ENCODE measurements at regions of chr1 and their contacts with region 1.

Region 1: GRCh38 chr1:159132271-159132881 is 39.0 kb upstream of the CADM3 start:
- H3K4me3 Mint-ChIP-seq: no peak overlapping the region
- H3K27ac Mint-ChIP-seq: no peak overlapping the region
- H3K4me1 Mint-ChIP-seq: no peaks in the 10 kb centered on the region
- H3K27me3 Mint-ChIP-seq: no peaks in the 10 kb centered on the region

Region 2: DNA sequence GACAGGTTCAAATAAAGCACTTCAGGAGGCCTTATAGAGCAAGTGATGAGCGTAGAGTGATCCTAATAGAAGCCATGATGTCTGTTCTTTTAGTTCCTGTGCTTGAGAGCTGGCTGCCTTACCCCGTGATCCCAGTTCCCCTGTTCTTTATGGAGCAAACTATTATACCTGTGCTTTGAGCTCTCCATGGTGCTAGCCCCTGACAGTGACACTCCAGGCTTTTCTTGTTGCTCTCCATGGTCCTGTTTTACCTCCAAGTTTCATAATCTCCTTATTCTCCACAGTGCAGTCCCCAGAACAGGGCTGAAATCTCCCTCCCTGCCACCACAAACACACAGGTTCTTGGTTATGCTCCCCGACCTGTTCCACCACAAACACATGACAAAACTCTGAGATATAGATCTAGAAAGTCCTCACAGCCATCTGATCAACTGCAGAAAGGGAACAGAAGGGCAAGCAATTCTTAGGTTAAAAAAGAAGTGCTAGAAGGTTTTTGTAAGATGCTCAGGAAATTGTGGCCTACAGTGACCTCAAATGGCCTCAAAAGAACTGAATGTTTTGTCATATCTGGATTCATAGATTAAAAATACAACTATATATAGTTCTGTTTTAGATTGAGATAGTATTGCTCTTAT is 45.0 kb after region 1 on chr1:
- intact Hi-C with region 1: no loop called
- H3K4me3 Mint-ChIP-seq: no peak overlapping the region
- H3K27ac Mint-ChIP-seq: no peak overlapping the region
- H3K4me1 Mint-ChIP-seq: peaks cover 26% of the 10 kb centered on the region
- H3K27me3 Mint-ChIP-seq: peaks cover 56% of the 10 kb centered on the region

Region 3: GRCh38 chr1:159197561-159198557 is 65.5 kb after region 1 on chr1:
- intact Hi-C with region 1: loop called (anchors 2 kb)
- H3K4me3 Mint-ChIP-seq: no peak overlapping the region
- H3K27ac Mint-ChIP-seq: no peak overlapping the region
- H3K4me1 Mint-ChIP-seq: peaks cover 27% of the 10 kb centered on the region
- H3K27me3 Mint-ChIP-seq: peaks cover 22% of the 10 kb centered on the region

Region 4: DNA sequence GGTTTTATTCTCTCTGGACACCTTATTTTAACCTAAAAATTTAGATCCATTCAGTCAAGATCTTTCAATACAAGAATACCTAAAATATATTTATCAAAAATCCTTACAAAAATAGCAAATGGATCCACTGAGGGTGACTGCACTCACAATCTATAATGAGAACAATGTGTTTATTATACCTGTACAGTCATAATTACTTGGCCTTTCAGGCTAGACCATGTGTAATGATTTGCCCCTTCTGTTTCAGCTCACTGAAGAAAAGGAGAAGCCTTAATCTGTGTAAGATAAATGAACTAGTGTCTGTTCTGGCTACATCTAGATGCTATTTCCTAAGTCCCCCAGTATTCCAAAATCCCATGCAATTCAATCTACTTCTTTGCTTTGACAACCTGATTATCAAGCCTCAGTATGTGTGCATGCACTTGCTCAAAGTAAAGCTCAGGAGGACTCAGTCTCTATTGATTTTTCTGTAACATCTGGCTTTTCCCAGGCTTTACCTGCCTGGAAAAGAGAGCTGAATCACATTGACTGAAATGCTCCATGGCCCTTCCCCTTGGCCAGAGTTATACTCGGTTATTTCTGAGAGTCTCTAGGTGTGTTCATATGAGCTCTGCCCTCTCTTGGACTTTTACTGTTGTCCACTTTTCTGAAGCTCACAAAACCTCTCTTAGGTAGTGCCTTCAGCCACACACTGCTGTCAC is 554.4 kb after region 1 on chr1:
- intact Hi-C with region 1: no loop called
- H3K4me3 Mint-ChIP-seq: no peak overlapping the region
- H3K27ac Mint-ChIP-seq: no peak overlapping the region
- H3K4me1 Mint-ChIP-seq: no peaks in the 10 kb centered on the region
- H3K27me3 Mint-ChIP-seq: peaks cover 3% of the 10 kb centered on the region

Measured in dendritic cell treated with granulocyte-macrophage colony-stimulating factor and Interleukin-4, amounts not matched to agents 40 ng/mL and 50 ng/mL, for 4 days (primary cell).